ENCODE measurements at regions of chr7 and their contacts with region 1.

Region 1: GRCh38 chr7:151244196-151244840 is 4.2 kb downstream of the SMARCD3 start:
- DNase-seq: no peak
- ATAC-seq: no peak
- H3K4me3 ChIP-seq: no peak overlapping the region
- H3K27ac ChIP-seq: no peak overlapping the region; the same call in 1 of the 2 replicates
- H3K4me1 ChIP-seq: peaks cover 21 to 47% of the 10 kb centered on the region in 2 experiments
- H3K27me3 ChIP-seq: no peaks in the 10 kb centered on the region
- CTCF ChIP-seq: peak in 2 of 3 experiments; percentile 96 to 97; a peak in 4 of 6 replicates
- POLR2A ChIP-seq: no peak
- RAD21 ChIP-seq: no peak

Region 2: GRCh38 chr7:150820578-150821198 is 423.6 kb before region 1 on chr7:
- CTCF ChIA-PET with region 1: no interaction called
- POLR2A ChIA-PET with region 1: no interaction called
- RAD21 ChIA-PET with region 1: no interaction called
- intact Hi-C with region 1: no loop called
- DNase-seq: no peak
- ATAC-seq: no peak
- H3K4me3 ChIP-seq: no peak overlapping the region
- H3K27ac ChIP-seq: no peak overlapping the region
- H3K4me1 ChIP-seq: no peaks in the 10 kb centered on the region
- H3K27me3 ChIP-seq: no peaks in the 10 kb centered on the region; the same call in 1 of the 2 replicates
- CTCF ChIP-seq: no peak
- POLR2A ChIP-seq: no peak
- RAD21 ChIP-seq: no peak

Region 3: GRCh38 chr7:151123822-151124464 is 120.4 kb before region 1 on chr7:
- CTCF ChIA-PET with region 1: no interaction called
- POLR2A ChIA-PET with region 1: no interaction called
- RAD21 ChIA-PET with region 1: no interaction called
- intact Hi-C with region 1: loop called (anchors 10 kb)
- DNase-seq: peak; percentile 66
- ATAC-seq: peak; percentile 95
- H3K4me3 ChIP-seq: no peak overlapping the region
- H3K27ac ChIP-seq: no peak overlapping the region; the same call in 1 of the 2 replicates
- H3K4me1 ChIP-seq: peaks cover 0 to 8% of the 10 kb centered on the region in 2 experiments; a peak in 1 of 4 replicates
- H3K27me3 ChIP-seq: no peaks in the 10 kb centered on the region
- CTCF ChIP-seq: peak; percentile 99
- POLR2A ChIP-seq: no peak
- RAD21 ChIP-seq: peak; percentile 93

Region 4: DNA sequence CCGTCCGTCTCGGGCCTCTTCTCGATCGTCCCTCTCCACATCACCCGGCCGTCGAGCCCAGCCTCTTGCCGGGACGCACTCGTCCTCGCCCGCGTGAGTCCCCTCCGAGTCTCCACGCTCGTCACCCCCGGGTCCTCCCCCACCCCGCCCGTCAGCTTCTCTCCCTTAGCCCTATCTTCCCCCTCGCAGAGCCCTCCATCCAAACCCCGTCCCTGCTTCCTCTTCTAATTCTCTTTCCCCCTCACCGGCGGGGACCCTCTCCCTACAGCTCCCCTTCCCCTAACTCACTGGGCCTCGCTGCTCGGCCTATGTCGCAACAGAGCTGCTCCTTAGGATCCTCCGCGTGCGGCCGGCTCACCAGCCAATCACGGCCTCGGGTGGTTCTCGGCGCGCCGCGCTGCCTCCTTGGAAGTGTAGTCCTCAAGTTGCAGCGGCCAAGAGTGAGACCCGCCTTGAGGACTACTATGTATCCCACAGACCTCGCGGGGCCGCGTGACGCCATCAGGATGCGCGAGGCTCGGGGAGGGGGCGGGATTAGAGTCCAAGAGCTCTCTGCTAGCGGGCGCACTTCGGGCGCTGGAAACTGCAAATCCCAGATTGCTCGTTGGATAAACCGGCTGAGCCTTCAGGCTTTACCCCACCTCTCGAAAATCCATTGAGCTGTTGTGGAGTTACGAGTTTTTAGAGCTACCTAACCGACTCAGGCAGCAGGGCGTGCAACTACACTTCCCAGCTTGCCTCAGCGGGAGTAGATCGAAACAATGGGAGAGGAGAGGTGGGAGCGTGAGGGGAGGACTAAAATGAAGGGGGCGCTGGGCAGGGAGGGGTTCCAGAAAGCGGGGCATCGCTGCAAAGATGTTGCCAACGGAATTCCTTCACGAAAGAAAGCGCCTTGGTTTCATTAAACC is 17.2 kb before region 1 on chr7 and contains the start of gene ABCF2:
- CTCF ChIA-PET with region 1: interaction called, 12 read pairs
- POLR2A ChIA-PET with region 1: interaction called, 5 read pairs
- RAD21 ChIA-PET with region 1: no interaction called
- intact Hi-C with region 1: no loop called
- DNase-seq: peak; percentile 98
- ATAC-seq: peak; percentile 99
- H3K4me3 ChIP-seq: peak within 1 kb of the TSS; percentile 76 to 83
- H3K27ac ChIP-seq: peak within 1 kb of the TSS; percentile 66
- H3K4me1 ChIP-seq: peaks cover 14 to 27% of the 10 kb centered on the region in 2 experiments
- H3K27me3 ChIP-seq: no peaks in the 10 kb centered on the region
- CTCF ChIP-seq: no peak
- POLR2A ChIP-seq: peak; percentile 54
- RAD21 ChIP-seq: no peak
- total RNA-seq, gene ABCF2: 63.7 TPM

Region 5: GRCh38 chr7:151432791-151433521 is 188.6 kb after region 1 on chr7:
- CTCF ChIA-PET with region 1: no interaction called
- POLR2A ChIA-PET with region 1: no interaction called
- RAD21 ChIA-PET with region 1: no interaction called
- intact Hi-C with region 1: no loop called
- DNase-seq: no peak
- ATAC-seq: peak; percentile 53
- H3K4me3 ChIP-seq: no peak overlapping the region
- H3K27ac ChIP-seq: no peak overlapping the region
- H3K4me1 ChIP-seq: peaks cover 23 to 33% of the 10 kb centered on the region in 2 experiments
- H3K27me3 ChIP-seq: no peaks in the 10 kb centered on the region
- CTCF ChIP-seq: peak in 1 of 3 experiments; percentile 26; a peak in 1 of 6 replicates
- POLR2A ChIP-seq: no peak
- RAD21 ChIP-seq: no peak

Measured in HCT116 (cell line).